ENCODE measurements at regions of chr15 and their contacts with region 1.

Region 1: DNA sequence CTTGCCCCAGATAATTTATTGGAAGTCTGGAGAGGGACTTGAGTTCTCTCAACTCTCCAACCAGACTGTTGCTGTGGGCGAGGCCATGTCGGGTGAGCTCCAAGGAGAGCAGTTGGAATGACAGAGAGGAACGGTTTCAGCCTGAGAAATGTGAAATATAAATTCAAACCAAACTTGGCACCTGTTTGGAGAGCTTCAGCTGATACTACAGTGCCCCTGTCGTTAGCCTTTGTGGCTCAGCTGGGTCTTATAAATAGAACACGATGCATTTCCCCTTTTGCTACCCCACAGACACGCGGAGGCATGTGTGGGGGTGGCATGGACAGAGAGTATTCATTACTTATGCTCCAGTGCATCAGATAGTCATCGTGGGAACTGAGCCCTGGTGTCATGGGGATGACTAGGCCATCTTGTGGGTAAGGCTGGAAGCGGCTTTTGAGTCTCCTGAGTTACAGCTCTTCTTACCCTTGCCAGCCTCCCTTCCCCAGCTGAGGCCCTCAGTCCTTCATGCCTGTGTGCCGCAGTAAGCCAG is 15.6 kb downstream of the SMAD3 start:
- DNase-seq: peak; percentile 85
- ATAC-seq: peak; percentile 57
- H3K4me3 Mint-ChIP-seq: no peak overlapping the region
- H3K27ac Mint-ChIP-seq: peak overlapping the region; percentile 82
- H3K4me1 Mint-ChIP-seq: peaks cover 92% of the 10 kb centered on the region
- H3K27me3 Mint-ChIP-seq: no peaks in the 10 kb centered on the region

Region 2: GRCh38 chr15:66940368-66940767 is 140.6 kb before region 1 on chr15:
- CTCF ChIA-PET with region 1: no interaction called
- POLR2A ChIA-PET with region 1: no interaction called
- intact Hi-C with region 1: loop called (anchors 5 kb)
- DNase-seq: peak; percentile 42
- ATAC-seq: peak; percentile 94
- H3K4me3 Mint-ChIP-seq: no peak overlapping the region
- H3K27ac Mint-ChIP-seq: no peak overlapping the region
- H3K4me1 Mint-ChIP-seq: peaks cover 14% of the 10 kb centered on the region
- H3K27me3 Mint-ChIP-seq: peaks cover 2% of the 10 kb centered on the region

Region 3: DNA sequence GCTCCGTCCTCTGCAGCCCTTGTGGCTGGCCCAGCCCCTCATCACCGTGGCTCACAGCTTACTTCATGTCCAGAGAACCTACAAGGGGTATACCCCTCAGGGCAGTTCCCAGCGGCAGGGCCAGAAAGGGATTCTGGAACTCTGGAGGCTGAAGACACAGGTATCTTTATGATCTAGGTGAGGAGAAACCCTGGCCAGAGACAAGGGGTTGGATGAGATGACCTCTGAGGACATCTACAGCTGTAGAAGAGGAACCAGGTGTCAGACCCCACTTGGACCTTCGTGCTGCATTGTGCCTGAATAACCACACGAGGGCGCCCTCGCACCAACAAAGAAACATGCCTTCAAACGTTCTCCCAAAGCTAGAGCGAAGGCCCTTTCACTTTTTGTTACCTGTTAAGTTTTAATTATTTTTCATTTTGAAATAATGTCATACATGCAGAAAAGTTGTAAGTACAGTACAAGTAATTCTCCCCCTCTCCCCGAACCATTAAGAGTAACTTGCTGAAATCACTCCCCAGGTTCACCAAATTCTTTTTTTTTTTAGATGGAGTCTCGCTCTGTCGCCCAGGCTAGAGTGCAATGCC is 134.3 kb before region 1 on chr15:
- CTCF ChIA-PET with region 1: interaction called, 5 read pairs
- POLR2A ChIA-PET with region 1: no interaction called
- intact Hi-C with region 1: loop called (anchors 5 kb)
- DNase-seq: peak; percentile 85
- ATAC-seq: peak; percentile 70
- H3K4me3 Mint-ChIP-seq: no peak overlapping the region
- H3K27ac Mint-ChIP-seq: no peak overlapping the region
- H3K4me1 Mint-ChIP-seq: peaks cover 3% of the 10 kb centered on the region
- H3K27me3 Mint-ChIP-seq: no peaks in the 10 kb centered on the region

Region 4: DNA sequence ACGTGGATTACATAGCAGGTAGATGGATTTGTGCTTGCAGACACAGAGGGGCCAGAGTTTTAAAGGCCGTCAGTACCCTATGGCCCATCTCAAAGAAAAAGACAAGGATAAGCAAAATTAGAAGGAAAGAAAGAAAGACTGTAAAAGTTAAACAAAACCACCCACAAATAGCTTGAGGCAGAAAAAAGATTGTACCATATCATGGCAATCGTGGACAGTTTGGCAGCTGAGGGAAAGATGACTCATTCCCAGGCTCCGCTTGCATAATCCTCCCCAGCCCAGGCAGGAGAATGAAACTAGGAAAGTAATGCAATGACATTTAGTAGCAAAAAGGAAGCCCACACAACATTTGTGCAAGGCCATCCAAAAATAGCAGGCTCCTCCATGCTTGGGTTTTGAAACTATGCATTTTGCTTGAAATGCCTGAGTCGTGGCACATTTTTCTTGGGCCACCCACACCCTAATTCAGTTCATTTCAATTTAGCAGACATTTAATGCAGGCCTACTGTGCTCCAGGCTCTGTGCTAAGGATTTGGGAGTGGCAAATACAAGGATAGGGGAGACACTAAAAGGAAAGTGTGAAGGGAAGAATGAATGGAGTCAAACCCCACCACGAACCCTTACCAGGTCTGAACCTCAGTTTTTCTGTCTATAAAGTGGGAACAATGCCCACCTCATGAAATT is 56.5 kb before region 1 on chr15:
- CTCF ChIA-PET with region 1: interaction called, 4 read pairs
- POLR2A ChIA-PET with region 1: no interaction called
- intact Hi-C with region 1: loop called in 1 of 2 experiments (anchors 1 kb)
- DNase-seq: peak; percentile 75
- ATAC-seq: peak; percentile 68
- H3K4me3 Mint-ChIP-seq: no peak overlapping the region
- H3K27ac Mint-ChIP-seq: peak overlapping the region; percentile 53
- H3K4me1 Mint-ChIP-seq: peaks cover 34% of the 10 kb centered on the region
- H3K27me3 Mint-ChIP-seq: peaks cover 6% of the 10 kb centered on the region

Region 5: GRCh38 chr15:67033571-67034044 is 47.4 kb before region 1 on chr15:
- CTCF ChIA-PET with region 1: no interaction called
- POLR2A ChIA-PET with region 1: no interaction called
- intact Hi-C with region 1: loop called (anchors 1 to 5 kb)
- DNase-seq: peak; percentile 48
- ATAC-seq: peak; percentile 47
- H3K4me3 Mint-ChIP-seq: no peak overlapping the region
- H3K27ac Mint-ChIP-seq: peak overlapping the region; percentile 5
- H3K4me1 Mint-ChIP-seq: peaks cover 13% of the 10 kb centered on the region
- H3K27me3 Mint-ChIP-seq: peaks cover 2% of the 10 kb centered on the region

Region 6: DNA sequence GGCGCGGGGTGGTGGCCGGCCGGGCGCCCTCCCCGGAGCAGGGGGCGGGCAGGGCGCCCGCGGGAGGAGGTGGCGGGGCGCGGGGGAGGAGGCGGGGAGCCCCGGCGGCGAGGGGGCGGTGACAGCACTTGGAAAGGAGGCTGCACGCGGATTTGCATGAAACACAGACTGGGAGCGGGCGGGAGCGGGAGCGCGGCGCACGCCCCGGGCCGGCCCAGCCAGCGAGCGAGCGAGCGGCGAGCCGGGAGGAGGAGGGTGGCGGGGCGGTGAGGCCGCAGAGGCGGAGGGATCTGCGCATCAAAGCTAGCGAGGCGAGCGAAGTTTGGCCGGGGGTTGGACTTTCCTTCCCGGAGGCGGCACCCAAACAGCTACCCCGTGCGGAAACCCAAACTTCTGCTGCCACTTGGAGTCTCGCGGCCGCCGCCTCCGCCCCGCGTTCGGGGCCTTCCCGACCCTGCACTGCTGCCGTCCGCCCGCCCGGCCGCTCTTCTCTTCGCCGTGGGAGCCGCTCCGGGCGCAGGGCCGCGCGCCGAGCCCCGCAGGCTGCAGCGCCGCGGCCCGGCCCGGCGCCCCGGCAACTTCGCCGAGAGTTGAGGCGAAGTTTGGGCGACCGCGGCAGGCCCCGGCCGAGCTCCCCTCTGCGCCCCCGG is 15.4 kb before region 1 on chr15 and contains the start of gene SMAD3:
- CTCF ChIA-PET with region 1: interaction called, 45 read pairs
- POLR2A ChIA-PET with region 1: interaction called, 10 read pairs
- intact Hi-C with region 1: loop called (anchors 1 kb)
- DNase-seq: peak; percentile 85
- ATAC-seq: peak; percentile 39
- H3K4me3 Mint-ChIP-seq: peak within 1 kb of the TSS; percentile 91
- H3K27ac Mint-ChIP-seq: peak within 1 kb of the TSS; percentile 92
- H3K4me1 Mint-ChIP-seq: peaks cover 47% of the 10 kb centered on the region
- H3K27me3 Mint-ChIP-seq: peaks cover 17% of the 10 kb centered on the region
- total RNA-seq, gene SMAD3: 33.7 to 40.8 TPM

Region 7: GRCh38 chr15:67188551-67189218 is 107.7 kb after region 1 on chr15:
- CTCF ChIA-PET with region 1: no interaction called
- POLR2A ChIA-PET with region 1: no interaction called
- intact Hi-C with region 1: no loop called
- DNase-seq: no peak
- ATAC-seq: no peak
- H3K4me3 Mint-ChIP-seq: no peak overlapping the region
- H3K27ac Mint-ChIP-seq: peak overlapping the region; percentile 78
- H3K4me1 Mint-ChIP-seq: peaks cover 7% of the 10 kb centered on the region
- H3K27me3 Mint-ChIP-seq: no peaks in the 10 kb centered on the region

Region 8: GRCh38 chr15:67303490-67304363 is 222.8 kb after region 1 on chr15:
- CTCF ChIA-PET with region 1: interaction called, 3 read pairs
- POLR2A ChIA-PET with region 1: no interaction called
- intact Hi-C with region 1: loop called (anchors 5 to 10 kb)
- DNase-seq: peak; percentile 22
- ATAC-seq: no peak
- H3K4me3 Mint-ChIP-seq: no peak overlapping the region
- H3K27ac Mint-ChIP-seq: no peak overlapping the region
- H3K4me1 Mint-ChIP-seq: peaks cover 16% of the 10 kb centered on the region
- H3K27me3 Mint-ChIP-seq: peaks cover 3% of the 10 kb centered on the region

Measured in activated CD4-positive, alpha-beta T cell treated with anti-CD3 and anti-CD28 coated beads for 36 hours (primary cell).